ENCODE measurements at regions of chr7 and their contacts with region 1.

Region 1: DNA sequence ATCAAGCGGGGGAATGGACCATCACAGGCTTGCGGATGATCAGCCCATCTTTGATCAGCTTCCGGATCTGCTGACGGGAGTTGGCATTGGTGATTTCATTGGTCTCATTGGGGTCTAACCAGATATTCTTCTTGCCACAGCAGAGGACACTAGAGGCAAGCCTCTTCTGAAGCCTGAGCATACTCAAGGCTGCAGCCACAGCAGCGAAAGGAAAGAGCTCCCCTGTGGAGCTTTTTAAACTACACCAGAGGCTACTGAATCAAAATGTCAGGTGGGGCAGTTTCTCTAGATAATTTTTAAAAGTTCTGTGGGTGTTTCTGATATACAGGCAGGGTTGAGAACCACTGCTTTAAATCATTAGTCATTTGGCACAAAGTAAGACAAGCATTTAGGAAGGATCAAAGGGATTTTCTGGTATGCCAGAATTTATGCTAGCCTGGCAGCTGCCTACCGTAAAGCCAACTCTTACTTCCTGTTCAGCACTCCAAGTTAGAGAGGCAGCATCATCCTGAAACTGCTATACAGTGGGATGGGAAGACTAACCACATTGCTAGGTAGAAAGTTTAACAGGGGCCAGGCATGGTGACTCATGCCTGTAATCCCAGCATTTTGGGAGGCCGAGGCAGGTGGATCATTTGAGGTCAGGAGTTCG is 7.0 kb downstream of the NAPEPLD start:
- DNase-seq: peak; percentile 86
- ATAC-seq: peak; percentile 88
- H3K4me3 ChIP-seq: peak overlapping the region; percentile 28; the same call in 1 of the 2 replicates
- H3K27ac ChIP-seq: peak overlapping the region; percentile 93
- H3K4me1 ChIP-seq: peaks cover 38% of the 10 kb centered on the region
- H3K27me3 ChIP-seq: no peaks in the 10 kb centered on the region
- CTCF ChIP-seq: no peak

Region 2: GRCh38 chr7:102811942-102812678 is 329.8 kb before region 1 on chr7:
- CTCF ChIA-PET with region 1: no interaction called
- POLR2A ChIA-PET with region 1: no interaction called
- intact Hi-C with region 1: no loop called
- DNase-seq: no peak
- ATAC-seq: no peak
- H3K4me3 ChIP-seq: no peak overlapping the region
- H3K27ac ChIP-seq: no peak overlapping the region
- H3K4me1 ChIP-seq: peaks cover 15% of the 10 kb centered on the region
- H3K27me3 ChIP-seq: no peaks in the 10 kb centered on the region
- CTCF ChIP-seq: no peak

Region 3: GRCh38 chr7:102912742-102913141 is 229.1 kb before region 1 on chr7 and contains the start of gene LRRC17:
- CTCF ChIA-PET with region 1: no interaction called
- POLR2A ChIA-PET with region 1: no interaction called
- intact Hi-C with region 1: no loop called
- DNase-seq: no peak
- ATAC-seq: no peak
- H3K4me3 ChIP-seq: no peak within 1 kb of the TSS
- H3K27ac ChIP-seq: no peak within 1 kb of the TSS
- H3K4me1 ChIP-seq: peaks cover 12% of the 10 kb centered on the region
- H3K27me3 ChIP-seq: no peaks in the 10 kb centered on the region
- CTCF ChIP-seq: no peak
- total RNA-seq, gene LRRC17: 0.11 TPM in 1 of 2 replicates, not detected in the other

Region 4: DNA sequence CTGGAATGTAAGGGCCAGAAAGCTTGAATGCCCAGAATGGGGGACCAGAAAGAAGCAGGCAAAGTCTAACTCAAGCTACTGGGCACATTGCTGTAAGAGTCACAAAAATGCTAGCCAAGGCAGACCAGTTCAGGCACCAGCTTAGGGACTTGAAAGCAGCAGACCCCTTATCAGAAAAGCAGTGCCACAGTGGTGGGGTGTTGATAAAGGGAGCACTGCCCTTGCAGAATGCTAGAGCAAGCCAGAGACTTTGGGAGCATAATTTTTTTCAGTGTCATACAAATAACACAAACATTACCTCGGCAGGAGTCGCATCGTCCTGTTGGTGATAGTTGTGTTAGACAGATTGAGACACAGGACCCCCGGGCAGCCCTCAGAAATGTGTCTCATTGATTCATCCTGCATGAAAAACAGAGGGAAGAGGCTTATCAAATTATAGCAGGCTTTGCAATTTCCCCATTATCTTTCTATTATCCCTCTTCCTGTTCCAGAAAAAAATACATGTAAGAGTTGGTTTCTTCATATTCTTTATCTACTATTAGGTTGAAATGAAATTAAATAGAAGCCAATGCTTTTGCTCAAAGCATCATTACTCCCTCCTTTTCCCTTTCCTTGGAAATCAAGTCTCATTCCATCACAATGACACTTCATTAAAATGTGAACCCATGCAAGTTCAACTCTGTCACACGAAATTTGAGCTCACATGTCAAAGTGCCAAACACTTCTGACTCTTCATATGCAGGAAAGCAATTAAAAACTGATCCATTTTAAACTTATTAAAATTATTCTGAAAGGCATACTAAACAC is 215.7 kb before region 1 on chr7:
- CTCF ChIA-PET with region 1: no interaction called
- POLR2A ChIA-PET with region 1: no interaction called
- intact Hi-C with region 1: no loop called
- DNase-seq: peak; percentile 12
- ATAC-seq: no peak
- H3K4me3 ChIP-seq: no peak overlapping the region
- H3K27ac ChIP-seq: no peak overlapping the region
- H3K4me1 ChIP-seq: peaks cover 14% of the 10 kb centered on the region; the same call in 1 of the 2 replicates
- H3K27me3 ChIP-seq: no peaks in the 10 kb centered on the region
- CTCF ChIP-seq: no peak

Region 5: DNA sequence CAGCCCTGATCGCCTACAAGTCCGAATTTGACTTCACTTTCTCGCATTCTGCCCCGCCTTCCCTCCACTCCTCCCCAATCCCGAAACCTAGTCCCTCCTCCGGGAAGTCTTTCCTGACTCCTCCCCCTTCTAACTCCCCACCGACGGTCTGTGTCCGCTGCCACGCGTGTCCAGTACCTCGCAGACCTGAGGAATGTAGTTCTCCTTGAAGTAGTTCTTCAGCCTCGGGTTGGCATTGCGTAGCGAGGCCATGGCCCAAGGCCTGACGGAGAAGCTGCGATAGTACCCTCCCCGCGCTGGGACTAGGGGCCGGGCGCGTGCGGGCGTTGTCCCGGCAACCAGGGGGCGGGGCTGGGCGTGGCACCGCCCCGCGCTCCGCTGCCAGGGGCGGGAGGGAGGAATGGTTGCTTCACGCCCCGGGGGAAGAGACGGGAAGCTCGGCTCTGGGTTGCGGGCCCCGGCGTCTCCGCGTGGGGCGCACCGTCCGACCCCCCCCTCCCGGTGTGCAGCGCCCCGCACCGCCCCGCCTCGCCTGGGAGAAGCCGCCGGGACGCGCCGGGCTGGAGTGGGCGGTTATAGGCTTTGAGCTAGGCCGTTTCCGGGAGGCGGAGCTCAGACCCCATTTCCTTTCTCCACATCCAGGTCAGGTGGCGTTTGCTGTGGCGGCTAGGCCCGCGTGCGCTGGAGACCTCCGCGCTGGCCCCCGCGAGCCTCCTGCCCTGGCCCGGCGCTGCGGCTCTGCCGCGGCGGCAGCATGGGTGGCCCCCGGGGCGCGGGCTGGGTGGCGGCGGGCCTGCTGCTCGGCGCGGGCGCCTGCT is 67.2 kb before region 1 on chr7 and contains the starts of genes ARMC10 and FBXL13:
- CTCF ChIA-PET with region 1: interaction called, 3 read pairs
- POLR2A ChIA-PET with region 1: interaction called, 3 read pairs
- intact Hi-C with region 1: loop called (anchors 2 kb)
- DNase-seq: peak; percentile 85
- ATAC-seq: peak; percentile 82
- H3K4me3 ChIP-seq: peak within 1 kb of the TSS; percentile 98
- H3K27ac ChIP-seq: peak within 1 kb of the TSS; percentile 59
- H3K4me1 ChIP-seq: peaks cover 12% of the 10 kb centered on the region; the same call in 1 of the 2 replicates
- H3K27me3 ChIP-seq: no peaks in the 10 kb centered on the region
- CTCF ChIP-seq: no peak
- total RNA-seq, gene ARMC10: 21.7 and 23.3 TPM in 2 replicates
- total RNA-seq, gene FBXL13: 1.1 TPM in 1 of 2 replicates, not detected in the other

Region 6: DNA sequence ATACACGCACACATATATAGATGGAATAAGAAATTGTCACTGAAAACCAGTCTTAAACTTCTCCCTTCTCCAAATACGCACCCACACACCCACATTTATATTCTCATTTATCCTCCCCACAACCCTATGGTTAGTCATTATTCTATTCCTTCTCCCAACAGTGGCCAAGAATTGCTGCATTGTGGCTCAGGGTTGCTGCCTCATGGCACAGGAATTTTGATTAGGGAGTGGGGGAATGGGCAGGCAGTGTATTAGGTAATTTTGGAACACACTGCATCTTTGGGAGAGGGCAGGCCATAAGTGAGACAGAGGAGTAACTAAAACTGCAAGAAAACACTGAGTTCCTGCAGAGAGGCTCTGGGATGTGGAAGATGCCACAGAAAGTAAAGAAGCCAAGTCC is 28.7 kb before region 1 on chr7:
- CTCF ChIA-PET with region 1: no interaction called
- POLR2A ChIA-PET with region 1: no interaction called
- intact Hi-C with region 1: loop called (anchors 2 kb)
- DNase-seq: peak; percentile 95
- ATAC-seq: peak; percentile 99
- H3K4me3 ChIP-seq: no peak overlapping the region
- H3K27ac ChIP-seq: peak overlapping the region; percentile 72
- H3K4me1 ChIP-seq: peaks cover 11% of the 10 kb centered on the region
- H3K27me3 ChIP-seq: no peaks in the 10 kb centered on the region
- CTCF ChIP-seq: no peak

Measured in PC-3 (cell line).